CD4-positive, alpha-beta memory T cell (primary cell): ENCODE measurements at regions of chr15 and their contacts with region 1.

Region 1: DNA sequence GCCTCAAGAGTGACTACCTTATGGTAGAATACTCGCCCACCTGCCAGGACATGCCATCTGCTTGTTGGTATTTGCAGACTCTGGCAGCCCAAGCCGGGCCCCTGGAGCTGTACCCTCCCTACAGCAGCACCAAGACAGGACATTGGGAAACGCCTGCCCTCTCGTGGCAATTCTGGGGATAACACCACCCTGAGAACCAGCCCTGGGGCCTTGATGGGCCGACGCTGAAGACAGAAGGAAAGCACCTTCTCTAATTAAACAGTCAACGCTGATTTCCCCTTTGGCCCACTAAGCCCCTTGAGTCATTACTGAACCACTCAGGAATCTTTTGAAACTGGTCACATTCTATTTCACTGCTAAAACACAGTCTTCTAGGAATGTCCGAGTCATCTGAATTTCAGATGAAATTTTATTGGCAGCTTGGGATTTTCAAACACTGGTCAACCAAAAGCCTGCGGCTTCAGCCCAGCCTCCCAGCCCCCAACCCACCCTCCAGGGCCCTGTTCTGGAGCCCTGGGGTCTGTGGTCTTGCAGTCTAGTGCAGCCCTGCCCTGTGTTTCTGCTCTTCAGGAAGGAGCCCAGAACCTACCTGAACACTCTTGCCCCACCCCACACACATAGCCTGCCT is 91.3 kb downstream of the TMEM266 start:
- DNase-seq: peak; percentile 50 to 62 (median 60)
- H3K4me3 ChIP-seq: no peak overlapping the region
- H3K4me3 Mint-ChIP-seq: no peak overlapping the region
- H3K27ac ChIP-seq: no peak overlapping the region
- H3K27ac Mint-ChIP-seq: no peak overlapping the region
- H3K4me1 ChIP-seq: peaks cover 4% of the 10 kb centered on the region
- H3K4me1 Mint-ChIP-seq: peaks cover 4 to 8% (median 7%) of the 10 kb centered on the region in 4 donors
- H3K27me3 ChIP-seq: no peaks in the 10 kb centered on the region
- H3K27me3 Mint-ChIP-seq: peaks cover 0 to 6% of the 10 kb centered on the region in 2 donors

Region 2: GRCh38 chr15:76057332-76058000 is 93.6 kb before region 1 on chr15:
- CTCF ChIA-PET with region 1: interaction called, 9 read pairs
- POLR2A ChIA-PET with region 1: no interaction called
- intact Hi-C with region 1: loop called (anchors 5 kb)
- DNase-seq: peak in 4 of 5 donors; percentile 33 to 41 (median 34)
- H3K4me3 ChIP-seq: no peak overlapping the region
- H3K4me3 Mint-ChIP-seq: peak overlapping the region in 6 of 8 donors; percentile 32 to 59 (median 48)
- H3K27ac ChIP-seq: no peak overlapping the region
- H3K27ac Mint-ChIP-seq: no peak overlapping the region
- H3K4me1 ChIP-seq: peaks cover 24% of the 10 kb centered on the region
- H3K4me1 Mint-ChIP-seq: peaks cover 5 to 27% (median 16%) of the 10 kb centered on the region in 4 donors
- H3K27me3 ChIP-seq: peaks cover 29% of the 10 kb centered on the region
- H3K27me3 Mint-ChIP-seq: peaks cover 37 to 47% of the 10 kb centered on the region in 2 donors

Region 3: GRCh38 chr15:76163475-76163881 is 12.4 kb after region 1 on chr15:
- CTCF ChIA-PET with region 1: interaction called, 48 read pairs
- POLR2A ChIA-PET with region 1: no interaction called
- intact Hi-C with region 1: no loop called
- DNase-seq: no peak
- H3K4me3 ChIP-seq: no peak overlapping the region
- H3K4me3 Mint-ChIP-seq: no peak overlapping the region
- H3K27ac ChIP-seq: no peak overlapping the region
- H3K27ac Mint-ChIP-seq: no peak overlapping the region
- H3K4me1 ChIP-seq: no peaks in the 10 kb centered on the region
- H3K4me1 Mint-ChIP-seq: no peaks in the 10 kb centered on the region
- H3K27me3 ChIP-seq: no peaks in the 10 kb centered on the region
- H3K27me3 Mint-ChIP-seq: peaks cover 0 to 2% of the 10 kb centered on the region in 2 donors

Region 4: GRCh38 chr15:76336254-76337058 is 185.4 kb after region 1 on chr15 and contains the start of gene ISL2:
- CTCF ChIA-PET with region 1: no interaction called
- POLR2A ChIA-PET with region 1: no interaction called
- intact Hi-C with region 1: no loop called
- DNase-seq: peak in 1 of 5 donors; percentile 35
- H3K4me3 ChIP-seq: peak within 1 kb of the TSS; percentile 2 to 24
- H3K4me3 Mint-ChIP-seq: peak within 1 kb of the TSS; percentile 80 to 93 (median 86)
- H3K27ac ChIP-seq: no peak within 1 kb of the TSS
- H3K27ac Mint-ChIP-seq: peak within 1 kb of the TSS in 6 of 7 donors; percentile 37 to 85 (median 68)
- H3K4me1 ChIP-seq: peaks cover 63% of the 10 kb centered on the region
- H3K4me1 Mint-ChIP-seq: peaks cover 35 to 64% (median 47%) of the 10 kb centered on the region in 4 donors
- H3K27me3 ChIP-seq: peaks cover 56% of the 10 kb centered on the region
- H3K27me3 Mint-ChIP-seq: peaks cover 58 to 65% of the 10 kb centered on the region in 2 donors
- total RNA-seq, gene ISL2: not detected